Dorsolateral prefrontal cortex (tissue), 120 donors: ENCODE measurements at regions of chr12 and their contacts with region 1.

Region 1: DNA sequence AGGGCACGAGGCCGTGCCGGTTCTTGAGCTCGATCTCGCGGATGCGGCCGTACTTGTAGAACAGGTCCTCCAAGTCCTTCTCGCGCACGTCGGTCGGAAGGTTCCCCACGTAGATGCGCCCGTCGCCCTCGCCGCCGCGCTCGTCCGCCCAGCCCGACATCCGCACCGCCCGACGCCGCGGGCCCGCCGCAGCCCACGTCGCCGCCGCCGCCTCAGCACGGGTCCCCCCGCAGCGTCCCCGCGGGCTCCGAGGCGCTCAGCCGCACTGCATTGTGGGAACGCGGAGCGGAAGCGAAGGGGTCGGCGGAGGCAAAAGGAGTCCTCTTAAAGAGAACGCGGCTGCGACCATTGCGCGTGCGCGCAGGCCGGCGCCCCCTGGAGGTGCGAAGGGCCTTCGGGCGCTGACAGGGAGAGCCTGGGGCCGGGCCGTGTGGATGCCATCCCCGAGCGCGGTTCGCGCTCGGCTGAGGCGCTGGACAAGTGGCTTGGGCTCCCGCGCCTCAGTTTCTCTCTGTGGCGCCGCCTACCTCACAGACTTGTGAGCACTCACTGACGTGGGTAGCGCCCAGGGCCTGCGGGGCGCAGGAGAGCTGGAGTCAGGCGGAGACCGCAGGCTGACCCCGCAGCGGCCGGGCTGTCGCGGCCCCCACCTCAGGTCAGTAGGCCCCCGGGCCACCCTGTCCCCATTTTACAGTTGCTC is at the start of gene SRSF9:
- DNase-seq: peak; percentile 92 to 97 (median 94)
- H3K4me3 ChIP-seq: peak within 1 kb of the TSS; percentile 67 to 99 (median 91)
- H3K27ac ChIP-seq: peak within 1 kb of the TSS; percentile 59 to 98 (median 92)
- H3K27me3 ChIP-seq: no peaks in the 10 kb centered on the region
- CTCF ChIP-seq: peak; percentile 83 to 99 (median 94)
- total RNA-seq, gene SRSF9: 76.0 to 113 (median 95.4) TPM

Region 2: GRCh38 chr12:120489018-120489417 is 19.4 kb after region 1 on chr12:
- intact Hi-C with region 1: no loop called
- DNase-seq: no peak
- H3K4me3 ChIP-seq: no peak overlapping the region
- H3K27ac ChIP-seq: peak overlapping the region in 54 of 59 donors; percentile 20 to 89 (median 74)
- H3K27me3 ChIP-seq: no peaks in the 10 kb centered on the region
- CTCF ChIP-seq: no peak

Region 3: GRCh38 chr12:120528861-120529525 is 59.4 kb after region 1 on chr12 and contains the start of gene COQ5:
- intact Hi-C with region 1: loop called (anchors 2 kb)
- DNase-seq: peak; percentile 89 to 97 (median 94)
- H3K4me3 ChIP-seq: peak within 1 kb of the TSS; percentile 61 to 99 (median 87)
- H3K27ac ChIP-seq: peak within 1 kb of the TSS; percentile 77 to 99 (median 93)
- H3K27me3 ChIP-seq: no peaks in the 10 kb centered on the region
- CTCF ChIP-seq: peak in 25 of 56 donors; percentile 3 to 52 (median 25)
- total RNA-seq, gene COQ5: 14.4 to 30.4 (median 22.9) TPM

Region 4: GRCh38 chr12:120534203-120534702 is 64.7 kb after region 1 on chr12 and contains the start of gene RNF10:
- intact Hi-C with region 1: loop called (anchors 2 kb)
- DNase-seq: peak; percentile 59 to 81 (median 78)
- H3K4me3 ChIP-seq: peak within 1 kb of the TSS; percentile 64 to 100 (median 97)
- H3K27ac ChIP-seq: peak within 1 kb of the TSS; percentile 63 to 96 (median 91)
- H3K27me3 ChIP-seq: no peaks in the 10 kb centered on the region
- CTCF ChIP-seq: peak in 13 of 56 donors; percentile 3 to 35 (median 24)
- total RNA-seq, gene RNF10: 177 to 288 (median 215) TPM

Region 5: GRCh38 chr12:120571299-120571698 is 101.7 kb after region 1 on chr12:
- intact Hi-C with region 1: loop called in 1 of 2 experiments (anchors 10 kb)
- DNase-seq: no peak
- H3K4me3 ChIP-seq: no peak overlapping the region
- H3K27ac ChIP-seq: peak overlapping the region in 1 of 59 donors; percentile 50
- H3K27me3 ChIP-seq: no peaks in the 10 kb centered on the region
- CTCF ChIP-seq: no peak